Activated CD4-positive, alpha-beta memory T cell treated with anti-CD3 and anti-CD28 coated beads for 36 hours (primary cell): ENCODE measurements at regions of chr3 and their contacts with region 1.

Region 1: DNA sequence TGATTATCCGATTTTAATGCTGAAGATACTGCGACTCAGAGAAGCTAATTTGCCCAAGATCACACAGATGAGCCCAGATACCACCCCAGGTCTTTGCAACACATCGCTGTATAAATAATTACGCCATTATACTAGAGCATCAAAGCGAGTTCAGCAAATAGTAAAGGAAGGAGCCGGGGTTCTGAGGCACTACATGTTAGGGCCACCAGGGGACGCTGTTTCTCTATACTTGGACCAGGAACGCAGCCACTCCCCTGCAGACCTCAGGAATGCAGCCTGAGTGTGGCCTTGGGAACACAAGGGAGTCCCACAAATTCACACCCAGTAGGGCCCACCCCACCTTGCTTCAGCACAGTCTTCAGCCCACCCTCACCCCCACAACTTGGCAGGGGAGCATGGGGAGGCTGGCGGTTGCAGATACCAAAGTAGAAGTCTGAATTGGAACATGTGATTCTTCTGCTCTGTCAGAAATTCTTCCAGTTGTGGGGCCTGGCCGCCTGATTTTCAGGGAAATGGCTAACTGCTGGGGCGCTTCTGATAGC is 57.8 kb upstream of the RYK start:
- DNase-seq: peak; percentile 84
- H3K4me3 Mint-ChIP-seq: no peak overlapping the region
- H3K27ac Mint-ChIP-seq: no peak overlapping the region
- H3K4me1 Mint-ChIP-seq: peaks cover 2% of the 10 kb centered on the region
- H3K27me3 Mint-ChIP-seq: peaks cover 36% of the 10 kb centered on the region

Region 2: GRCh38 chr3:134373994-134374790 is 65.8 kb after region 1 on chr3 and contains the start of gene AMOTL2:
- CTCF ChIA-PET with region 1: interaction called, 10 read pairs
- POLR2A ChIA-PET with region 1: no interaction called
- intact Hi-C with region 1: loop called (anchors 1 kb)
- DNase-seq: peak; percentile 29
- H3K4me3 Mint-ChIP-seq: peak within 1 kb of the TSS; percentile 66
- H3K27ac Mint-ChIP-seq: no peak within 1 kb of the TSS
- H3K4me1 Mint-ChIP-seq: peaks cover 8% of the 10 kb centered on the region
- H3K27me3 Mint-ChIP-seq: peaks cover 32% of the 10 kb centered on the region
- total RNA-seq, gene AMOTL2: 0.12 to 0.39 TPM

Region 3: DNA sequence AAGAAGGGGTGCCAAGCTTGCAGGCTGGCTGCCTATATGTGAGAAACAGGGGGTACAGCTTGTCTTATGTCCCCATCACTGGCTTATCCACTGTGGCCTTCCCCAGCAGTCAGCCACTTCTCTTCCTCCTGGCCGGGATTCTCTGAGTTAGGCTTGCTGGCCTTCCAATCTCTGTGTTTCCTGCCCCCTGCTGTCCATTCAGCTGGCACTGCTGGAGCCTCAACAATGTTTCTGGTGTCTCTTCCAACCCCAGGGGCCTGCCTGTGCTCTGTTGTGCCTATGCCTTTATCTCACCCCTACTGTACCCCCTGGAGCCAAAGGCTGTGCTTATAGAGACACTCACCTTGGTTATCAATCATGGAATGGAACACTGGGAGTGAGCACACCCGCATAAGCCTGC is 140.9 kb after region 1 on chr3:
- CTCF ChIA-PET with region 1: interaction called, 5 read pairs
- POLR2A ChIA-PET with region 1: no interaction called
- intact Hi-C with region 1: loop called (anchors 1 kb)
- DNase-seq: peak; percentile 14
- H3K4me3 Mint-ChIP-seq: no peak overlapping the region
- H3K27ac Mint-ChIP-seq: no peak overlapping the region
- H3K4me1 Mint-ChIP-seq: no peaks in the 10 kb centered on the region
- H3K27me3 Mint-ChIP-seq: peaks cover 16% of the 10 kb centered on the region

Region 4: DNA sequence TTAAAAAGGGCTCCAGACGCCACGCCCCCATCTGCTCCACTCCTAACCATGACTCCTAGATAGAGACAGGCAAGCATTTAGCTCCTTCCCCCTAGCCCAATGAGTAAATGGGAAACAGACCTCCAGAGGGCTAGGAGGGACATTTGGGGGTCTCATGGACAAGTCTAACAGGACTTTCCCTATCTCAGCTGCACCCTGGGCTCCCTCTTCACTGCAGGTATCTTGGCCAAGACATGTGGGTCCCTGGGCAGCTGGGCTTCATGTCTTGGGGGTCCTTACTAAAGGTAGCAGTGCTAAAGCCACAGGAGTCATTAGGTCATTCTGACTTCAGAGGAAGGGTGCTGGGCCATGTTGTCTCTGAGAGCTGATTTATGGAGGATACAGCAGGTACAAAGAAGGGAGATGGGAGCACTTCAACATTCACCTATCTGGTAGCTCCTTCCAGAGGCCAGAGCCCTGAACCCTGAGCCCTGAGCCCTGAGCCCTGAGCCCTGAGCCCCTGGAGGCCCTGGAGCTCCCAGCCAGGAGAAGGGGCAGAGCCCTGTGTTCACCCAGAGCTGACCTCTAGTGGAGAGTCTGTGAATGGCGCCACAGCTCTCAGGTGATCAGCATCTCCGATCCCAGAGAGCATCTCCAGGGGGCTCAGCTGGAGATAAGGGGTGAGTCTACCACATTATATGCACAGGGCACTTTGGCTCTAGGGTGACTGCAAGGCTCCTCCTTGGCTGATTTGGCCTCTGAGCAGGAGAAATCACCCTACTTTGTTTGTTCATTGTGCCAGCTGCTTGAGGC is 446.5 kb after region 1 on chr3:
- CTCF ChIA-PET with region 1: no interaction called
- POLR2A ChIA-PET with region 1: no interaction called
- intact Hi-C with region 1: no loop called
- DNase-seq: peak; percentile 51
- H3K4me3 Mint-ChIP-seq: no peak overlapping the region
- H3K27ac Mint-ChIP-seq: no peak overlapping the region
- H3K4me1 Mint-ChIP-seq: no peaks in the 10 kb centered on the region
- H3K27me3 Mint-ChIP-seq: peaks cover 4% of the 10 kb centered on the region